ENCODE measurements at regions of chr16 and their contacts with region 1.

Region 1: GRCh38 chr16:70348991-70349390 is 2.3 kb downstream of the DDX19A start:
- DNase-seq: no peak
- ATAC-seq: no peak
- H3K4me3 ChIP-seq: no peak overlapping the region
- H3K4me3 Mint-ChIP-seq: no peak overlapping the region
- H3K27ac ChIP-seq: no peak overlapping the region
- H3K27ac Mint-ChIP-seq: peak overlapping the region; percentile 20
- H3K4me1 ChIP-seq: peaks cover 23% of the 10 kb centered on the region
- H3K4me1 Mint-ChIP-seq: peaks cover 33% of the 10 kb centered on the region
- H3K27me3 ChIP-seq: no peaks in the 10 kb centered on the region
- H3K27me3 Mint-ChIP-seq: no peaks in the 10 kb centered on the region
- CTCF ChIP-seq: no peak

Region 2: DNA sequence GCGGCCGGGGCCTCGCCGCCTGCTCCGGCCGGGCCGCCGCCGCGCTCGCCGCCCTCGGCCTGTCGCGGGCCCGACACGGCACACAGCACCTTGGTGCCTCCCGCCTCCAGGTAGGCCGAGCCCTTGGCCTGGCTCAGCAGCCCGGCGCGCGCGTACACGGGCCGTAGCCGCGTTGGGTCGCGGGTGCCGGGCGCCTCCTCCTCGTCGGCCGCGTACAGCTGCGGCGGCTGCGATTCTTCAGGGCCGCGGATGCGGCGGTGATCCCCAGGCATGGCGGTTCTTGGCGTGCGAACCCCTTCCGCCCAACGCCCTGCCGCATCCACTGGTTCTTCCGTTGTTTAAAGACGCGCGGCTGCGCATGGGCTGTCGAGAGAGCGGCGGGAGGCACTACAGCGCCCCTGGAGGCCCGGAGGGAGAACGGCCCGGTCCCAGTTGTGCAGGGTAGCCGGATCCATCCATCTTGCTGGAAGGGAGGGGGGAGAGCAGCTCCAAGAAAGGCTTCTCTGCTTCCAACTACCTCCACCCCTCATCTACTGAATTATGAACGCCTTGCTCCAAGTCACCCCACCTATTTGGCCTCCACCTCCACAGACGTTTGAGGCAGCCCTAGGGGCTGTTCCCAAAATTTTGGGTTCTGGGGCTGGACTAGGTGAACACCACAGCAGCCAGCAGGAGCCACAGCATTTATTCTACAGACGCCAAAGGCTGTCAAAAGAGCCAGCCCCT is 97.2 kb before region 1 on chr16 and contains the start of gene EXOSC6:
- CTCF ChIA-PET with region 1: interaction called, 5 read pairs
- POLR2A ChIA-PET with region 1: interaction called, 3 read pairs
- intact Hi-C with region 1: loop called (anchors 1 to 2 kb)
- DNase-seq: peak; percentile 80 to 97 (median 92)
- ATAC-seq: peak; percentile 97
- H3K4me3 ChIP-seq: peak within 1 kb of the TSS; percentile 41 to 62
- H3K4me3 Mint-ChIP-seq: peak within 1 kb of the TSS; percentile 92
- H3K27ac ChIP-seq: peak within 1 kb of the TSS; percentile 60 to 85
- H3K27ac Mint-ChIP-seq: peak within 1 kb of the TSS; percentile 97
- H3K4me1 ChIP-seq: peaks cover 18% of the 10 kb centered on the region
- H3K4me1 Mint-ChIP-seq: peaks cover 26% of the 10 kb centered on the region
- H3K27me3 ChIP-seq: no peaks in the 10 kb centered on the region
- H3K27me3 Mint-ChIP-seq: no peaks in the 10 kb centered on the region
- CTCF ChIP-seq: peak; percentile 80
- total RNA-seq, gene EXOSC6: 40.6 to 43.6 TPM

Region 3: DNA sequence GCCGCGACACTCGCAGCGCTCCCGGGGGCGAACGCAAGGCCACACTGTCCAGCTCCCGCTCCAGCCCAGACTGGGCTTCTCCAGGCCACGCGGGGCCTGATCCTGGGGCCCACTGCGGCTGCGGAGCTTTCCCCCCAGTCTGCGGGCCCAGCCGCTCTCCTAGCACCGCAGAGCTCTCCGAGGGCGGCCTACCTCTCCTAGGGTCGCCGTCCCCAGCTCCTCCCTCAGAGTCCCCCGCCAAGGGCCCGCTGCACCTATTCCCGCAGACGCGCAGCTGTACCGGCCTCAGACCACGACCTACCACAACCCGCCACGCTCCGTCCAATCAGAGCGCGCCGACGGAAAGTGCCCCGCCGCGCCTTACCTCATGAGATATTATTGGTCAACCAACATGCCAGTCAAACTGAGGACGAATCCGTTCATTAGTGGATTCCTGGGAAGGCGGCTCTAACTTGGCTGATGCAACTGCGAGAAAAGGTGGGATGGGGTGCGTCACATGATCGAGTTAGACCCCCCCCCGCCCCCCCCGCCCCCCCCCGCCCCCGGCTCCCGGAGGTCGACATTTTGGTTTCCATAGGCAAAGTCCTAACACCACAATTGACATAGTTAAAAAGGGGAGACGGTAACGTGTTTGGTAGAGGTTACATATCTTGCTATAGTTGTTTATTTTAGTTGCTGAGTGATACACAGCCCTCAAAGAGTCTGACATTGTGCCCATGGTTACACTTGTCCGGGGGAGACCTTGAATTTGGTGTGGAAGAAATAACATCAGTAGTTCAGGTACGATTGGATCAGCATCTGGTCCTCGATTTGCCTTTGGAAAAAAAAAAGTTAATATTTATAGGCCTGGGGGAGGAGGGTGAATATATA is 59.5 kb before region 1 on chr16 and contains the start of gene AARS1:
- CTCF ChIA-PET with region 1: no interaction called
- POLR2A ChIA-PET with region 1: interaction called, 17 read pairs
- intact Hi-C with region 1: loop called (anchors 1 to 2 kb)
- DNase-seq: peak; percentile 87 to 99 (median 92)
- ATAC-seq: peak; percentile 93
- H3K4me3 ChIP-seq: peak within 1 kb of the TSS; percentile 75 to 81
- H3K4me3 Mint-ChIP-seq: peak within 1 kb of the TSS; percentile 100
- H3K27ac ChIP-seq: peak within 1 kb of the TSS; percentile 89 to 94
- H3K27ac Mint-ChIP-seq: peak within 1 kb of the TSS; percentile 99
- H3K4me1 ChIP-seq: peaks cover 10% of the 10 kb centered on the region
- H3K4me1 Mint-ChIP-seq: peaks cover 18% of the 10 kb centered on the region
- H3K27me3 ChIP-seq: no peaks in the 10 kb centered on the region
- H3K27me3 Mint-ChIP-seq: no peaks in the 10 kb centered on the region
- CTCF ChIP-seq: no peak
- total RNA-seq, gene AARS1: 10.1 to 10.6 TPM

Region 4: DNA sequence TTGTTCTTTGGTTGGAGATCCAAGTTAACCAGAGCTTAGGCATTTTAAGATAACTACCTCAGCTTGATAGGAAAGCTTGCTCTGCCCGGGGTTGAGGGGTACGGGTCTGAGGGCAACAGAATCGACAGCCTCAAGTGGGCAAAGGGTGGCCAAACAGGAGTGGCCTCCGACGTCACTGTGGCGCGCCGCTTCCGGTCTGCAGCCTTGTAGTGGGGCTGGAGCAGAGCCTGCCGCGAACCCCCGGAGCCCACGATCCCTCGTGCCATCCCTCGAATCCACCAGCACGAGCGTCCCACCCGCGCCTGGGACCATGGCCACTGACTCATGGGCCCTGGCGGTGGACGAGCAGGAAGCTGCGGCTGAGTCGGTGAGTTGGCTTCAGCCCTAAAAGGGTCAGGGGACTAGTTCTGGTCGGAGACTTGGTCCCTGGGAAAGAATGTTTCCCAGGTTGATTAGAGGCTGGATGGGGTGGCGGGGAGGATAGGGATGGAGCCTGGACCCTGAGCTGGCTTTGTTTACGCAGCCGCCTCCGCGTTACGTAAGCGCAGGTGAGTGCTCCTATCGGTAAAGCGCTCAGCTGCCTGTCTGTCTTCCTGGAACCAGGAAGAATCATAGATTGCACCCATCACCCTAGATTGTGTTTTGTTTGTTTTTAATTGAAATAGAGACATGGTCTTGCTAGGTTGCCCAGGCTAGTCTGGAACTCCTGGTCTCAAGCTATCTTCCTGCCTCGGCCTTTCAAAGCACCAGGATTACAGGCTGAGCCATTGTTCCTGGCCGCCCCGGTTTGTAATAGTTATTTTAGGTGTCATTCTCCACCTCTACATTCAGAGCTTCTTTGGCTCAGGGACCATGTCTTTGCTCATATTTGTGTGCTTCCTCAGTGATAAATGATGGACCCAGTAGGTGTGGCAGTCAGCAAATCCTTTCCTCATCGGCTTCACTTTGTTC is 49.7 kb before region 1 on chr16 and contains the start of gene DDX19B:
- CTCF ChIA-PET with region 1: interaction called, 9 read pairs
- POLR2A ChIA-PET with region 1: interaction called, 32 read pairs
- intact Hi-C with region 1: loop called (anchors 1 to 2 kb)
- DNase-seq: peak; percentile 13 to 77 (median 58)
- ATAC-seq: peak; percentile 81
- H3K4me3 ChIP-seq: peak within 1 kb of the TSS; percentile 75 to 90
- H3K4me3 Mint-ChIP-seq: peak within 1 kb of the TSS; percentile 97
- H3K27ac ChIP-seq: peak within 1 kb of the TSS; percentile 96 to 97
- H3K27ac Mint-ChIP-seq: peak within 1 kb of the TSS; percentile 99
- H3K4me1 ChIP-seq: peaks cover 15% of the 10 kb centered on the region
- H3K4me1 Mint-ChIP-seq: peaks cover 43% of the 10 kb centered on the region
- H3K27me3 ChIP-seq: no peaks in the 10 kb centered on the region
- H3K27me3 Mint-ChIP-seq: no peaks in the 10 kb centered on the region
- CTCF ChIP-seq: no peak
- total RNA-seq, gene DDX19B: 30.5 to 33.1 TPM

Region 5: DNA sequence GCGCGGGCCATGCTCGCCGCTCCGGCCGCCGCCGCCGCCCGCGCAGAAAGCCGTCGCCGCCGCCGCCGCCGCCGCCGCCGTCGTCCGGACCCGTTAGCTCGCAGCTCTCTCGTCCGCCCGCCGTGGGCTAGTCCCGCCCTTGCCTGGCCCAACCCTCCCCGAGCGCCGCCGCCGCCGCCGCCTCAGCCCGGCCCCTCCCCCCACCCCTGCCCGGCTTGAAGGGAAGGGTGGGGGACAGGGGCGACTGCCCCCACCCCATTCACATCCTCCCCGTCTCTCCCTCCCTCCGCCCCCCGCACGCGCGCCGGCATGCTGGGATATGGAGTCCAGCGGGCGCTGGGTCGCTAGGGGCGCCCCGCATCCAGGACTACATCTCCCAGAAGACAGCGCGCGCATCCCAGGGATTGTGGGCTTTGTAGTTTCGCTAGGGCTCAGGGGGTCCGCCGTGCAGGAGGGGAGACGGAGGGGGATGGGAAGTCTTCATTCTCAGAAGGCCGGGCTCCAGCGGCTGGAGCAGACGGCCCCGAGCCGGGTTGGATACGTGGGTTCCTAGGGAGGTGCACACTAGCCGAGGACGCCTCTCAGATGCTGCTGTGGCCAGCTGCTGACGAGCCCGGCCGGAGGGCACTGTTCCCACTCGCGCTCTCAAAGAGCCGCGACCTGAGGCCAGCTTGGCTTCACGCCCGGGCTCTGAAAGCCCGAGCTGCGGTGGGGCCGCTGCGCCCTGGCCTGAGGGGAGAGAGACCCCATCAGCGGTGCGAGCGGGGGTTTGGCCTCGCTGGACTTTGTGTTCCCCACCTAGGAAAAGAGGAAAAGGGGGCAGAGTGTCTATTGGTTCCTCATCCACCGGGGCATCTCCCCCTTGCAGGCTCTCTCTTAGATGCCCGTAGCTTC is 90.2 kb after region 1 on chr16 and contains the start of gene ST3GAL2:
- CTCF ChIA-PET with region 1: no interaction called
- POLR2A ChIA-PET with region 1: interaction called, 9 read pairs
- intact Hi-C with region 1: loop called (anchors 1 kb)
- DNase-seq: peak; percentile 87 to 97 (median 94)
- ATAC-seq: peak; percentile 97
- H3K4me3 ChIP-seq: peak within 1 kb of the TSS; percentile 75 to 91
- H3K4me3 Mint-ChIP-seq: peak within 1 kb of the TSS; percentile 94
- H3K27ac ChIP-seq: peak within 1 kb of the TSS; percentile 48 to 65
- H3K27ac Mint-ChIP-seq: peak within 1 kb of the TSS; percentile 89
- H3K4me1 ChIP-seq: peaks cover 36% of the 10 kb centered on the region
- H3K4me1 Mint-ChIP-seq: peaks cover 39% of the 10 kb centered on the region
- H3K27me3 ChIP-seq: no peaks in the 10 kb centered on the region
- H3K27me3 Mint-ChIP-seq: no peaks in the 10 kb centered on the region
- CTCF ChIP-seq: no peak
- total RNA-seq, gene ST3GAL2: 5.6 to 6.1 TPM

Region 6: GRCh38 chr16:70454222-70455034 is 105.4 kb after region 1 on chr16 and contains the start of gene FCSK:
- CTCF ChIA-PET with region 1: no interaction called
- POLR2A ChIA-PET with region 1: interaction called, 5 read pairs
- intact Hi-C with region 1: loop called (anchors 1 kb)
- DNase-seq: peak; percentile 50 to 85 (median 70)
- ATAC-seq: peak; percentile 90
- H3K4me3 ChIP-seq: peak within 1 kb of the TSS; percentile 98 to 100
- H3K4me3 Mint-ChIP-seq: peak within 1 kb of the TSS; percentile 90
- H3K27ac ChIP-seq: peak within 1 kb of the TSS; percentile 76 to 97
- H3K27ac Mint-ChIP-seq: peak within 1 kb of the TSS; percentile 88
- H3K4me1 ChIP-seq: peaks cover 20% of the 10 kb centered on the region
- H3K4me1 Mint-ChIP-seq: peaks cover 27% of the 10 kb centered on the region
- H3K27me3 ChIP-seq: no peaks in the 10 kb centered on the region
- H3K27me3 Mint-ChIP-seq: no peaks in the 10 kb centered on the region
- CTCF ChIP-seq: no peak
- total RNA-seq, gene FCSK: 17.8 to 18.2 TPM

Region 7: DNA sequence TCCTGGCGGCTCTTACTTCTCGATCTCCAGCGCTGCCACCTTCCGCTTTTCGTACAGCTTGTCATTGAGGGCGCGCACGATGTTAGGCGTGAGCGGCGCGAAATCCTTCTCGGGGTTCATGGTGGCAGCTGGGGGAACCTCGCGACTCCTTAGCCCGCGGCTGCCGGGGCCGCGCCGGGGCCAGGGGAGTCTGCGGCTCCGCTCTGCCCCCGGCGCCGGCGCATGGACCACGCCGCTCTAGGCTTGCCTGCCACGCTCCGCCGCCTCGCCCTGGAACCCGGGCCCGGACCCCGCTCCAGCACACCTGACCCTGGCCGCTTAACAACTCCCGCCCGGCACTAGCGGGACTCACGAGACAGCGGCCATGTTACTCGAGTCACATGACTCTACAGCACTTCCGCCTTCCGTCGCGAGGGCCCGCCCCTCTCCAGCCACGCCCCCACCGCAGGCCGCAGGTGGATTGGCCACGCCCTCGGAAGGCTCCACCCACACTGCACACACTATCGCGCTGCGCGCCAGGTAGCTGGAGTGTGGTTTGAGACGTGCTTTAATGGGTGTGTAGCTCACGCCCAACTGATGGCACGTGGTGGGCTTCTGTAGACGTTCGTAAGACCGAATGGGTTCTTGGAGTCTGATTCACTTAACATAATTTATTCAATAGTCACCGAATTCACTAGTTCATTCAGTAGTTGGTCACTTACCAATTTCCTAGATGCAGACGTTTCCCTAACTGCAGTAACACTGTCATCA is 452.0 kb after region 1 on chr16 and contains the start of gene VAC14:
- CTCF ChIA-PET with region 1: no interaction called
- POLR2A ChIA-PET with region 1: no interaction called
- intact Hi-C with region 1: loop called in 1 of 2 experiments (anchors 2 kb)
- DNase-seq: peak; percentile 95 to 99 (median 97)
- ATAC-seq: peak; percentile 99
- H3K4me3 ChIP-seq: peak within 1 kb of the TSS; percentile 63 to 65
- H3K4me3 Mint-ChIP-seq: peak within 1 kb of the TSS; percentile 95
- H3K27ac ChIP-seq: peak within 1 kb of the TSS; percentile 52 to 57
- H3K27ac Mint-ChIP-seq: peak within 1 kb of the TSS; percentile 97
- H3K4me1 ChIP-seq: peaks cover 12% of the 10 kb centered on the region
- H3K4me1 Mint-ChIP-seq: peaks cover 39% of the 10 kb centered on the region
- H3K27me3 ChIP-seq: no peaks in the 10 kb centered on the region
- H3K27me3 Mint-ChIP-seq: no peaks in the 10 kb centered on the region
- CTCF ChIP-seq: no peak
- total RNA-seq, gene VAC14: 27.1 to 27.2 TPM